ENCODE measurements at regions of chr6 and their contacts with region 1.

Region 1: GRCh38 chr6:73520688-73521350 is at the start of gene EEF1A1:
- DNase-seq: peak; percentile 93

Region 2: DNA sequence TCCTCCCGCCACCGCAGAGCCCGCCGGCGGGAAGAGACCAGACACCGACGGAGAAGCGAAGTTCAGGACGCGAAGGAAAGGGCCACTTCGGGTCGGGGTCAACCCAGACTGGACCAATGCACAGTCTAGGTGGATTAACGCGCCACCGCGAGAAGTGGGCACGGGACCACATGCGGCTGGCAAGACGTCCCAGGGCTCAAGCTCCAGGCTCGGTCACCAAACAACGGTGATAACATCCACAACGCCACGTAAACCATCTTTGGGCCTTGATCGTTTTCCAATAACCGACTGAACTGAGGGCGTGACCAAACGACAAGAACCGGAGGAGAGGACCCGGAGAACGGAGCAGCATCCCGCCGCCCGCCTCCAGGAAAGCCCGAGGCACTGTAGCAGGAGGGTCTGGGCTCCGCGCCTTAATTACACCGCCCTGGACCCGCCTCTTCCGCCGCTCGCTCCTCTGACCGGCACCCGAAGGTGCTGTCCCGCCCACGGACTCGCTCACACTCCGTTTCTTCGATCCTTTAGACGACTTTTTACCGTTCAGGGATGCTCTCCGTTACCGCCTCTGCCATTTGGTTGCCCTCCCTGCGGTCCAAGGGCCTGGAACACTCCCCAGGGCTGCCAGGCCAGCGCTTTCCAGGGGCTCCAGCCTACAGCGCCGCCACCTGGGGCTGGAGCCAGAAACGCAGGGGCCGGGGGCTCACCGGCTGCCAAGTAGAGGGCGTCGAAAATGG is 210.9 kb before region 1 on chr6:
- CTCF ChIA-PET with region 1: no interaction called
- POLR2A ChIA-PET with region 1: no interaction called
- DNase-seq: no peak

Region 3: DNA sequence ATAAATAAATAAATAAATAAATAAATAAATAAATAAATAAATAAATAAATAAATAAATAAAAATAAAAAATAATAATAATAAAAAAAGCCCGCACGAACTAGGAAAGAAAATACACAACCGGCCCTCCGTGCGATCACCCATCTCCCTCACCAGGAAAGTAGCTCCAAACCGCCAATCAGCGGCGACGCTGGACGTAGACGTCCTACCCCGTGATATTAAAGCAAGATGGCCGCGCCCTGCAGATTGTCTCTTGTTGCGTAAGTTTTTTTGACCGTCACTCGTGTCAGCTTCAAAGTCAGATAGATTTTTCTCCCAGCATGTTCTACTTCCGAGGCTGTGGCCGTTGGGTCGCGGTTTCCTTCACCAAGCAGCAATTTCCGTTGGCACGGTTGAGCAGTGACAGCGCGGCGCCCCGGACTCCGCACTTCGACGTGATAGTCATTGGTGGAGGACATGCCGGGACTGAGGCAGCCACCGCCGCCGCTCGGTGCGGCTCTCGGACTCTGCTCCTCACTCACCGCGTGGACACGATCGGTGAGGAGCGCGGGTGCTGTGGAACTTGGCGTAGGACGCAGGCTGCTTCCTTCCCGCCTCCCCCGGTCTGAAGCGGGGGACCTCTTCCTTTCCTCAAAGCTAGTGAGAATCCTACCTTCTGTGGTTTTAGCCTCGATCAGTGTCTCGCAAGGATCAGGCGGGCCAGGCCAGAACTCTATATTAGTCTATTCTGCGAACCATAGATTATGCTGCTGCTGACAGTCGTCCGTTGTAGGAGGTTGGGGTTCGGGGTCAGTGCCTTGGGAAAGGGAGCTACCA is 59.1 kb before region 1 on chr6 and contains the start of gene MTO1:
- CTCF ChIA-PET with region 1: no interaction called
- POLR2A ChIA-PET with region 1: interaction called, 15 read pairs
- DNase-seq: peak; percentile 86

Region 4: GRCh38 chr6:73548458-73549446 is 27.9 kb after region 1 on chr6:
- CTCF ChIA-PET with region 1: interaction called, 5 read pairs
- POLR2A ChIA-PET with region 1: interaction called, 35 read pairs
- DNase-seq: no peak

Region 5: DNA sequence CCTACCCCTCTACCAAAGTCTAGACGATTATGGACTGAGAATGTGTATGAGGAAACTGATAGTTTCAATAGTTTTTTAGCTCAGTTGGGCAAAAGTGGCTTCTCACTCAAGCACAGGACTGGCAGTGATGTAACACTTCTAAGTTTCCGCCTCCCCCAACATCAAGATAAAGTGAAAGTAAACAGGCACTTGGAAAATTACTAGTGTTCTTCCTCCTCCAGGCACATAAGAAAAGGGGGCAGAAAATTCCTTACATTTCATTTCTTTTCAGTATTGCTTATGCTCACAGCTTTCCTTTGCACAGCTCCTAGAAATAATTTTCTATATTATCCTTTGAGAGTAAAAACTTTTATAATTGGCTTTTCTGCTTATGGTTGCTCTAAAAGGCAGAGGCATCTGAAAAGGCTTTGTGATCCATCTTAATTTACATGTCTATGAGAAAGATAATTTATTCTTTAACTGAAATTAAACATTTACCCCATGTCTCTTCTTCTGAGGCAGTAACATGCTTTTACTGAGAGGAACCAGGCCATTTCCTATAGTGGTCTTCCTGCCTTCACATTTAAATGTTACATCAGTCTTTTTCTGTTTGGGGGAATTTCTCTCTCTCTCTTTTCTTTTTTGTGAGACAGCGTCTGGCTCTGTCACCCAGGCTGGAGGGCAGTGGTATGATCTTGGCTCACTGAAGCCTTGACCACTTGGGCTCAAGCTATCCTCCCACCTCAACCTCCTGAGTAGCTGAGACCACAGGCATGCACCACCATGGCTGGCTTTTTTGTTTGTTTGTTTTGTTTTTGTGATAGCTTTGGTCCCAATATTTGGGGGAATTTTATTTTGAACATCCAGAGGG is 65.0 kb after region 1 on chr6:
- CTCF ChIA-PET with region 1: interaction called, 3 read pairs
- POLR2A ChIA-PET with region 1: interaction called, 49 read pairs
- DNase-seq: peak; percentile 38

Region 6: DNA sequence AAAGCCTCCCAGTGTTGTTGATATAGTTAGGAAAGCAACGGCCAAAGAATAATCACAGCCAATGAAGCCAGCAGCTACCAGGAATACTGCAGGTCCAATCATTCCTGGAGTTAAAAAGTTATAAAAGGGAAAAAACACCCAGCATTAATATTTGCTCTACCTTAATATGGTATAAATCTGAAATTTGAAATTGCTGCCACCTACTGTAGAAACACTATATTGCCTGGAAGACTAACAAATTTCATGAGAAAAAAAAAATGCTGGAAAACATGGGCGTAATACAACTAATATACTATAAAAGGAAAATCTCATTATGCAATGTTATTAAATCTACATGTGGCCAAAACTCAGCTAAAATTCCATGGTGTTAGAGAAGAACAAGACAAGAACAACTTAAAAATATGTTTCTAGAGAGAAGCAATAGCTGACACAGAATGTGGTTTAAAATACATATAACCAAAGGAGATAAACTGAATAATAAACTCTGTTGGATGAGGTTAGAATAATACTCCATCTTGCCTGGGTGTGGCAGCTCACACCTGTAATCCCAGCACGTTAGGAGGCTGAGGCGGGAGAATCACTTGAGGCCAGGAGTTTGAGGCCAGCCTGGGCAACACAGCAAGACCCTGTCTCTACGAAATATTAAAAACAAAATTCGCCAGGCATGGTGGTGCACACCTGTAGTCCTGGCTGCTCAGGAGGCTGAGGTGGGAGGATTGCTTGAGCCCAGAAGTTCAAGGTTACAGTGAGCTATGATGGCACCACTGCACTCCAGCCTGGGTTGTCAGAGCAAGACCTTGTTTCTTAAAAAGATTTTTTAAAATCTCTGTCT is 89.8 kb after region 1 on chr6:
- CTCF ChIA-PET with region 1: interaction called, 6 read pairs
- POLR2A ChIA-PET with region 1: interaction called, 26 read pairs
- DNase-seq: no peak

Measured in HEK293T (cell line).